ENCODE measurements at regions of chr9 and their contacts with region 1.

Region 1: DNA sequence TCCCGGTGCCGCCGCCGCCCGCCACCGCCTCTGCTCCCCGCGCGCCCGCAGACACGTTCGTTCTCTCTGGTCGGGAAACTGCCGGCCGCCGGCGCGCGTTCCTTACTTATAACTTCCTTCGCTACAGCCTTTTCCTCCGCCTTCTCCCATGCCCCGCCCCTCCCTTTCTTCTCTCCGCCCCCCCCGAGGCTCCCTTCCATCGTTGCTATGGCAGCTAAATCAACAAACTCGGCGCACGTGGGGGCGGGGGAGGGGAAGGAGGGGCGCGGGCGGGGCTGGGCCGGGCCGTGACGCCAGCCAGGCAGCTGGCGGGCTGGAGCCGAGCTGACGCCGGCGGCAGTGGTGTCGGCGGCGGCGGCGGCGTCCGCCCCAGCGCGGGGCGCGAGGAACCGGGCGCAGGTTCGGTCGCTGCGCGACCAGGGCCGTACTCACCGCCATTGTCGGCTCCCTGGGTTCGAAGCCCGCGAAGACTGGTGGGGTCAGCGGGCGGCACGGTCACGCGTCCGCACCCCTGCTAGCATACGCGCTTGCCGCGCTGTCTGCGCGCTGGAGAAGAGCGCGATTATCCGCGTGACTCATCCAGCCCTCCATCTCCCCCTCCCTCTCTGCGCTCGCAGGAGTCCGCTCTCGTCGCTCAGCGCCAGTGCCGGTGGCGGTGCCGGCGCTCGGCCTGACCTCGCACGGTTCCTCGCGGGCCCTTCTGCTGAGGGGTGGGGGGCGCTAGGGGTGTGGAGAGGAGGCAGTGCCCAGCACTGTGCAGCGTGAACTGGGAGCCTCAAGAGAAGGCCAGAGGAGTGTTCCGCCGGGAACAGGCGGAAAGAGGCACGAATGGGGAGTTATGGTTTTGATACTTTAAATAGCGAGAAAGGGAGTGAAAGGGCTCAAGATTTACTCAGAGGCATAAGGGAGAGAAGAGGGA is at the start of gene KLF4:
- DNase-seq: peak; percentile 91
- ATAC-seq: peak; percentile 78
- H3K4me3 ChIP-seq: peak within 1 kb of the TSS; percentile 60
- H3K27ac ChIP-seq: peak within 1 kb of the TSS; percentile 60
- H3K4me1 ChIP-seq: peaks cover 2% of the 10 kb centered on the region; the same call in 1 of the 2 replicates
- H3K27me3 ChIP-seq: peaks cover 1% of the 10 kb centered on the region; the same call in 1 of the 2 replicates
- CTCF ChIP-seq: 0 out of 2 replicates have a peak, but pooled peaks have one; percentile 0
- POLR2A ChIP-seq: peak; percentile 93
- RAD21 ChIP-seq: no peak
- total RNA-seq, gene KLF4: 1.3 and 2.2 TPM in 2 replicates

Region 2: DNA sequence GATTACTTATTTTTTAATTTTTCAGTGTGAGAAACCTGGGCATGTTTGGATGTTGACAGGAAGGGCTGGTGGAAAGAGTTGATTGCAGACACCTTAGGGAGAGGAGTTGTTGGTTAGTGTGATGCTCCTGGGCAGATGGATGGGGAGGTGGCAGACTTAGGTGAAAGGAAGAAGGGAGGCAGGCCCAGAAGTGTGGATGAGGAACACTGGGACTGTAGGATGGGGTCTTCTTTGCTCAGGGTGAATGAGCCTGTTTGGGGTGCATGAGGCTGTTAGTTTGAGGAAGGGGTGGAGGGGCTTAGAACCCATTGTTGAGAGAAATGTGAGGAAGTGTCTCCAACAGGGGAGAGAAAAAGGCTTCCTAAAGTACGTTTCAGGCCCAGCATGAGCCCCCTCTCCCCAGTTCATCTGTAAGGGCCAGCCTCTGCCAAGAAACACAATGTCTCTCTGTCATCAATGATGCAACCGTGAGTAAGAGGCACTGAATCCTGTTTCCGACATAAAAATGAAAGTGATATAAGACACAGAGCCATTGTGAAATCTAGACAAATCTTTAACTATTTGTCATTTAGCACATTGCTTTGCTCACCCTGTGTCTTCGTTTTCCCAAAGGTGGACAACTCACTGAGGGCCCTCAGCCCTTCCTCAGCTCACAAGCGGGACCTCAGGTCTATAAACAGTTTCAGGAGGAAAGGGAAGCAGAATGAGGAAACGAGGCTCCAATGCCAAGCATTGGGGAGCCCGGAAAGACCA is 58.3 kb after region 1 on chr9:
- CTCF ChIA-PET with region 1: no interaction called
- POLR2A ChIA-PET with region 1: no interaction called
- dilution Hi-C with region 1: no loop called
- in situ Hi-C with region 1: no loop called
- intact Hi-C with region 1: loop called (anchors 1 kb)
- DNase-seq: peak; percentile 96
- ATAC-seq: peak; percentile 83
- H3K4me3 ChIP-seq: no peak overlapping the region
- H3K27ac ChIP-seq: peak overlapping the region; percentile 84
- H3K4me1 ChIP-seq: peaks cover 12% of the 10 kb centered on the region
- H3K27me3 ChIP-seq: no peaks in the 10 kb centered on the region
- CTCF ChIP-seq: no peak
- POLR2A ChIP-seq: no peak
- RAD21 ChIP-seq: 0 out of 2 replicates have a peak, but pooled peaks have one; percentile 7

Region 3: GRCh38 chr9:107749787-107750444 is 260.0 kb after region 1 on chr9:
- CTCF ChIA-PET with region 1: interaction called, 3 read pairs
- POLR2A ChIA-PET with region 1: no interaction called
- dilution Hi-C with region 1: no loop called
- in situ Hi-C with region 1: no loop called
- intact Hi-C with region 1: loop called (anchors 2 kb)
- DNase-seq: peak; percentile 96
- ATAC-seq: peak; percentile 78
- H3K4me3 ChIP-seq: no peak overlapping the region
- H3K27ac ChIP-seq: peak overlapping the region; percentile 81
- H3K4me1 ChIP-seq: peaks cover 19% of the 10 kb centered on the region
- H3K27me3 ChIP-seq: no peaks in the 10 kb centered on the region
- CTCF ChIP-seq: no peak
- POLR2A ChIP-seq: no peak
- RAD21 ChIP-seq: no peak

Region 4: GRCh38 chr9:107883496-107884124 is 393.7 kb after region 1 on chr9:
- CTCF ChIA-PET with region 1: no interaction called
- POLR2A ChIA-PET with region 1: no interaction called
- dilution Hi-C with region 1: no loop called
- in situ Hi-C with region 1: loop called (anchors 25 kb)
- intact Hi-C with region 1: no loop called
- DNase-seq: no peak
- ATAC-seq: no peak
- H3K4me3 ChIP-seq: no peak overlapping the region
- H3K27ac ChIP-seq: no peak overlapping the region
- H3K4me1 ChIP-seq: peaks cover 5% of the 10 kb centered on the region; the same call in 1 of the 2 replicates
- H3K27me3 ChIP-seq: no peaks in the 10 kb centered on the region
- CTCF ChIP-seq: no peak
- POLR2A ChIP-seq: no peak
- RAD21 ChIP-seq: no peak

Region 5: DNA sequence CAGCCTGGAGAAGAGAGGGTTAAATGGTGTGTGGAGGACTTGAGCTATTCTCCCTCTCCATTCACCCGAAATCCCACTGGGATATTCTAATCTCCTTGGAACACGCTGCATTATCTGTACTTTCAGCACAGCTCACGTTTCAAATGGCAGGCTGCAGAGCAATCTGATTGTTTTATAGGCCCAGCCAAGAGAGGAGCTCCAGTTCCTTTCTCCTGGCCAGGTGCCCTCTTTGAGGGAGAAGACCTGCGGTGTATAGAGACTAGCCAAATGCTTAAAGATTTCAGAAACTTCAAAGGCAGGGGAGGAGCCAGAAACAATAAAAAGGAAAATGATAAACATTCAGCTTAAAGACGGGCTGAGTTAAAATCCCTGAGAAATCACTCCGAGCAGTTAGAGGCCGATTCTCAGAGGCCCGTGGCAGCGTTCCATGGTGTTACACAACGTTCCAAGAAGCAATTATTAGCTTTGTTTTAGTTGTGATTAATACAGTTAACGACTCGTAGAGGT is 563.7 kb after region 1 on chr9:
- CTCF ChIA-PET with region 1: no interaction called
- POLR2A ChIA-PET with region 1: no interaction called
- dilution Hi-C with region 1: no loop called
- in situ Hi-C with region 1: loop called (anchors 5 kb)
- intact Hi-C with region 1: loop called (anchors 1 kb)
- DNase-seq: peak; percentile 80
- ATAC-seq: 0 out of 2 replicates have a peak, but pooled peaks have one; percentile 2
- H3K4me3 ChIP-seq: no peak overlapping the region
- H3K27ac ChIP-seq: peak overlapping the region; percentile 70; the same call in 1 of the 2 replicates
- H3K4me1 ChIP-seq: peaks cover 32% of the 10 kb centered on the region
- H3K27me3 ChIP-seq: no peaks in the 10 kb centered on the region
- CTCF ChIP-seq: no peak
- POLR2A ChIP-seq: no peak
- RAD21 ChIP-seq: no peak

Region 6: GRCh38 chr9:108272349-108272899 is 782.5 kb after region 1 on chr9:
- CTCF ChIA-PET with region 1: no interaction called
- POLR2A ChIA-PET with region 1: no interaction called
- dilution Hi-C with region 1: no loop called
- in situ Hi-C with region 1: no loop called
- intact Hi-C with region 1: loop called (anchors 1 kb)
- DNase-seq: peak; percentile 39
- ATAC-seq: peak; percentile 82
- H3K4me3 ChIP-seq: peak overlapping the region; percentile 24; the same call in 1 of the 2 replicates
- H3K27ac ChIP-seq: peak overlapping the region; percentile 88; the same call in 1 of the 2 replicates
- H3K4me1 ChIP-seq: peaks cover 7% of the 10 kb centered on the region; the same call in 1 of the 2 replicates
- H3K27me3 ChIP-seq: no peaks in the 10 kb centered on the region
- CTCF ChIP-seq: peak; percentile 58
- POLR2A ChIP-seq: no peak
- RAD21 ChIP-seq: peak; percentile 70